ENCODE measurements at regions of chr5 and their contacts with region 1.

Region 1: GRCh38 chr5:140073296-140073695 is 30.2 kb upstream of the NRG2 start:
- DNase-seq: no peak
- ATAC-seq: no peak

Region 2: GRCh38 chr5:140145818-140146522 is 72.7 kb after region 1 on chr5:
- intact Hi-C with region 1: loop called (anchors 2 to 5 kb)
- DNase-seq: peak; percentile 84
- ATAC-seq: peak; percentile 95 to 96

Region 3: DNA sequence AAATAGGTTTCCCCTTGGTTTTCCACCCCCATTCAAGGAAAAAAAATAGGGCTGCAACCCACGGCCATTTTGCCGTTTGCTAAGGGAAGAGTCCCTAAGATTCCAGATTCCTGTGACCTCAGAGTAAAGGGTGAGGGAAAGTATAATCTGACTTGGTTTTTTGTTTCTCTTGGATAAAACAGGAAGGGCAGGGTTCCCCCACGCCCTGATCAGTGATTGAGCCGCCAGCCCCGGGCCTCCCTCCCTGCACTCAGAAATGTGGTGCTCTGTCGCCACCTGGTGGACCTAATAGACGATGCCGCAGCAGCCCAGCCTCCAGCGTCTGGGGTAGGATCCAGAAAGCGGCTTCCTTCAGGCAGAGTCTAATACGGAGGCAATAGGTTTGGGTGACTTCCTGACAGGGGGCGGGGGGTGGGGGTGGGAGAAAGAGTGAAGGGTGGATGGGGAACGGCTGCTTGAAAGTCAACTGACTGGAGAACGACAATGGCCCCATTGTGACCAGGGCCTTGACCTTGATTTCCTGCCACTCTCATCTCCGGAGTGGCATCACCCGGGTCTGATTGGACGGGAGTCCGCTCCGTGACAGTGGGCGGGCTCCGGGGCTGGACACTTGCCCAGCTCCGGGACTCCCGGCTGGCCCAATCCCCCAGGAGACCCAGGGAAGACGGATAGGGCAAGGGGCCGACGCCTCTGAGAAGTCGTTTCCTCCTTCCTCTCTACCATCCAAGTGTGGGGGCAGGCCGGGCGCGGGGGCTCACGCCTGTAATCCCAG is 83.9 kb after region 1 on chr5:
- intact Hi-C with region 1: loop called in 1 of 2 experiments (anchors 1 kb)
- DNase-seq: peak; percentile 92
- ATAC-seq: peak; percentile 95 to 96

Region 4: GRCh38 chr5:140357726-140358093 is 284.4 kb after region 1 on chr5:
- intact Hi-C with region 1: loop called in 1 of 2 experiments (anchors 10 kb)
- DNase-seq: peak; percentile 85
- ATAC-seq: peak; percentile 94

Region 5: GRCh38 chr5:140639148-140639979 is 566.1 kb after region 1 on chr5 and contains the start of gene TMCO6:
- intact Hi-C with region 1: no loop called
- DNase-seq: peak; percentile 99
- ATAC-seq: peak; percentile 99
- total RNA-seq, gene TMCO6: 3.9 to 6.4 TPM